Aorta (tissue), 5 donors: ENCODE measurements at regions of chr16 and their contacts with region 1.

Region 1: DNA sequence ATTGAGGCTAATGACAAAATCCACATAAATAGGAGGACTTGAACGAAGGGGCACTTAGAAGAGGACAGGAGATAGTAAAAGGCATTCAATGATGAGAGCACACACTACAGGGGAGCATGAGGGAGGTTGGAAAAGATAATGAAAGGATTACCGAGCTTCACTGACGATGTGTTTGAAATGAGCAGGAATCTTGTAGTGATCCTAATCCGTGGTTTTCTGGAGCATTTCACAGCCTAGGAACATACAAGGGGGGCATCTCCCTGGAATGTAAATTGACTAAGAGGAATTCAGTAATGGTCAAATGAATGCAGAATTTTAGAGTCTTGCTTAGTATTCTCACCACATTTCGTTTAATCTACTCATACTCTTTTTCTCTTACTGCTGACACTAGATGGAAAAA is 5.2 kb downstream of the ATMIN start:
- DNase-seq: no peak
- ATAC-seq: no peak
- H3K4me3 ChIP-seq: no peak overlapping the region
- H3K27ac ChIP-seq: no peak overlapping the region
- H3K4me1 ChIP-seq: peaks cover 4 to 7% of the 10 kb centered on the region in 2 donors
- H3K27me3 ChIP-seq: no peaks in the 10 kb centered on the region

Region 2: DNA sequence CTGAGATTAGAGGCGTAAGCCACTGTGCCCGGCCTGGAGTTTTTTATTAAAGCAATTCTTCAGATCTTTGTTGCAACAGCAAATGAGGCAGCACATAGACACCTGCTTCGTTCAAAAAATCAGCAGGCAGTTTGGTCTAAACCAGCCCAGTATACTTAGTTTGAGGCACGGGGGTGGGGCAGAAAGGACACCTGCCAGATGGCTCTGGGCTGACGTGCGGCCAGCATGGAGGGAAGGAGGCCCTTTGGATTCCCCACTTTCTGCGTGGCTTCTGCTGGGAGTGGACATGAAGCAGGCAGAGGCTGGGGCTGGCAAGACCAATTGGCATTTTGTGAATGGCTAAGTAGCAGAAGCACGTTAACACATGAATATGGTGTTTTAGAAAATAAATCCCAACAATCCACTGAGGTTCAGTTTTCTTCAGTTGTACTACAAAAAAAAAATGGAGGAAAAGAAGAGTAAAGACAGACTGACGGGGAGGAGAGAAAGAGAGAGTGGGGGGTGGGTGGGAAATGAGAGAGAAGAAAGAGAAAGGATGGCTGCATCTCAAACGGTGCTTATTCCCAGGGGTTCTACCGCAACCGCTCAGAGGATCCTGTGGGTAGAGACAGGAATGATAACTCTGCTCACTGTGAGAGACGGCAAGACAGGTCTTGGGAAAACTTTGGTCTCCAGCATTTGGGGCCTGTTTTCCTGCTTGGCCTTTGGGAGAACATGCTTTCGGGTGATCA is 19.9 kb after region 1 on chr16:
- intact Hi-C with region 1: loop called in 1 of 2 experiments (anchors 1 kb)
- DNase-seq: no peak
- ATAC-seq: no peak
- H3K4me3 ChIP-seq: no peak overlapping the region
- H3K27ac ChIP-seq: no peak overlapping the region
- H3K4me1 ChIP-seq: no peaks in the 10 kb centered on the region
- H3K27me3 ChIP-seq: no peaks in the 10 kb centered on the region